Sigmoid colon (tissue), 7 donors: ENCODE measurements at regions of chr6 and their contacts with region 1.

Region 1: GRCh38 chr6:42745707-42746462 is at the start of gene TBCC:
- DNase-seq: peak; percentile 99
- H3K4me3 ChIP-seq: peak within 1 kb of the TSS; percentile 69 to 100 (median 86)
- H3K27ac ChIP-seq: peak within 1 kb of the TSS; percentile 91 to 99 (median 98)
- H3K4me1 ChIP-seq: peaks cover 0 to 36% (median 31%) of the 10 kb centered on the region in 4 donors
- H3K27me3 ChIP-seq: no peaks in the 10 kb centered on the region
- CTCF ChIP-seq: no peak
- EP300 ChIP-seq: no peak
- POLR2A ChIP-seq: peak; percentile 95 to 98
- total RNA-seq, gene TBCC: 16.6 to 39.6 (median 27.7) TPM

Region 2: GRCh38 chr6:42599558-42599957 is 146.3 kb before region 1 on chr6:
- intact Hi-C with region 1: no loop called
- DNase-seq: no peak
- H3K4me3 ChIP-seq: no peak overlapping the region
- H3K27ac ChIP-seq: no peak overlapping the region
- H3K4me1 ChIP-seq: no peaks in the 10 kb centered on the region
- H3K27me3 ChIP-seq: no peaks in the 10 kb centered on the region
- CTCF ChIP-seq: no peak
- EP300 ChIP-seq: no peak
- POLR2A ChIP-seq: no peak

Region 3: DNA sequence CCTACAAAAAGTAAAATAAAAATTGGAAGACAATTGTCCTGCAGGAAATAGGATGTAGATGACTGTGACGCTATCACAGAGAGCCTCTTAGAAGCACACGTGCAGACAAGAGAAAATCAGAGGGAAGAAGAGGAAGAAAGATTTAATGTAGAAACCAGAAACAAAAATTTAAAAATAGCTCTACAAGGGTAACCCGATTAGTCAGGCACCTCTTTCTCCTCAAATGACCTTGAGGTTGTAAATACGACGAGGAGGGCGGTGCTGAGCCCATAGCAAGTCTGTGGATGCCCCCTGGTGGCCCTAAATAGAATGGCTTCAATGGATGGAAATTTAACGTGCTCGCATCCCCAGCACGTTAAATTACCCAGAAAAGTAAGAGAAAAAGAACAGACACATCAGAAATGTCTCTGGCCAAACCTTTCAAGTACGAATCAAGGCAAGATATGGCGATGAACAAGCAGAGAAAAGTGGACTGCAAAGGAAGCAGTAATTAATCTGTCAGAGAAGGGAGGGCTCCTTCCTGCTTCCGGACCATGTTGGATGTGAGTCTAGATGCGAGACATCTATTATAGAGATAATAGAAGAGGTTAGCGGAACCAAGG is 19.3 kb before region 1 on chr6:
- intact Hi-C with region 1: loop called (anchors 2 kb)
- DNase-seq: peak; percentile 93
- H3K4me3 ChIP-seq: peak overlapping the region; percentile 31 to 60 (median 52)
- H3K27ac ChIP-seq: peak overlapping the region; percentile 76 to 90 (median 87)
- H3K4me1 ChIP-seq: peaks cover 0 to 31% (median 13%) of the 10 kb centered on the region in 4 donors
- H3K27me3 ChIP-seq: no peaks in the 10 kb centered on the region
- CTCF ChIP-seq: peak; percentile 86 to 94 (median 92)
- EP300 ChIP-seq: no peak
- POLR2A ChIP-seq: no peak

Region 4: DNA sequence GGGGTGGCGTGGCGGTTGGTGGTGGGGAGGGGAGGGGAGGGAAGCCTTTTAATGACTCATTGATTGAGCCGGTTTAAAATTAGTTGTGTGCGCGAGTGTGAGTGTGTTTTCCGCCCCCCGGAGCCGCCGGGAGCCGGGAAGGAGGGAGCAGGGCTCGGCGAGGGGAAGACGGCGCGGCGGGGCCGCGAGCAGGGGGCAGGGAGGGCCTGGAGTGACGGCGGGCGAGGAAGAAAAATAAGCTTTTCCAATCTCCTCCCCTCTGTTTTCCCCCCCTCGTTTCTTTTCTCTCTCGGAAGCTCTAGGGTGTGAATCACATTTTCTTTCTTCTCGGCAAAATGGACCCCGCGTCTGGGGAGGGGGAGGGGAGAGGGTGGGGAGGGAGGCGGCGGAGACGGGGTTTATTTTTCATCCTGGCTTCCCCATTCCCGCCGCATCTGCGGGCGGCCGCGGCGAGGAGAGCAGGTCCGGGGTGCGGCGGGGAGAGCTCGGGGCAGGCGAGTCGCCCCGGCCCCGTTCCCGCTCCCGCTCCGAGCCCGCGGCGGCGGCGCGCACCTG is 36.8 kb after region 1 on chr6:
- intact Hi-C with region 1: loop called (anchors 1 kb)
- DNase-seq: peak; percentile 90
- H3K4me3 ChIP-seq: peak overlapping the region; percentile 80 to 98 (median 90)
- H3K27ac ChIP-seq: peak overlapping the region; percentile 96 to 100 (median 100)
- H3K4me1 ChIP-seq: peaks cover 0 to 44% (median 38%) of the 10 kb centered on the region in 4 donors
- H3K27me3 ChIP-seq: no peaks in the 10 kb centered on the region
- CTCF ChIP-seq: no peak
- EP300 ChIP-seq: no peak
- POLR2A ChIP-seq: peak; percentile 70 to 78

Region 5: GRCh38 chr6:42819803-42820511 is 74.1 kb after region 1 on chr6:
- intact Hi-C with region 1: loop called (anchors 2 kb)
- DNase-seq: no peak
- H3K4me3 ChIP-seq: no peak overlapping the region
- H3K27ac ChIP-seq: peak overlapping the region; percentile 69 to 82 (median 78)
- H3K4me1 ChIP-seq: peaks cover 0 to 37% (median 21%) of the 10 kb centered on the region in 4 donors
- H3K27me3 ChIP-seq: no peaks in the 10 kb centered on the region
- CTCF ChIP-seq: peak in 2 of 4 experiments; percentile 14 to 29
- EP300 ChIP-seq: no peak
- POLR2A ChIP-seq: no peak

Region 6: DNA sequence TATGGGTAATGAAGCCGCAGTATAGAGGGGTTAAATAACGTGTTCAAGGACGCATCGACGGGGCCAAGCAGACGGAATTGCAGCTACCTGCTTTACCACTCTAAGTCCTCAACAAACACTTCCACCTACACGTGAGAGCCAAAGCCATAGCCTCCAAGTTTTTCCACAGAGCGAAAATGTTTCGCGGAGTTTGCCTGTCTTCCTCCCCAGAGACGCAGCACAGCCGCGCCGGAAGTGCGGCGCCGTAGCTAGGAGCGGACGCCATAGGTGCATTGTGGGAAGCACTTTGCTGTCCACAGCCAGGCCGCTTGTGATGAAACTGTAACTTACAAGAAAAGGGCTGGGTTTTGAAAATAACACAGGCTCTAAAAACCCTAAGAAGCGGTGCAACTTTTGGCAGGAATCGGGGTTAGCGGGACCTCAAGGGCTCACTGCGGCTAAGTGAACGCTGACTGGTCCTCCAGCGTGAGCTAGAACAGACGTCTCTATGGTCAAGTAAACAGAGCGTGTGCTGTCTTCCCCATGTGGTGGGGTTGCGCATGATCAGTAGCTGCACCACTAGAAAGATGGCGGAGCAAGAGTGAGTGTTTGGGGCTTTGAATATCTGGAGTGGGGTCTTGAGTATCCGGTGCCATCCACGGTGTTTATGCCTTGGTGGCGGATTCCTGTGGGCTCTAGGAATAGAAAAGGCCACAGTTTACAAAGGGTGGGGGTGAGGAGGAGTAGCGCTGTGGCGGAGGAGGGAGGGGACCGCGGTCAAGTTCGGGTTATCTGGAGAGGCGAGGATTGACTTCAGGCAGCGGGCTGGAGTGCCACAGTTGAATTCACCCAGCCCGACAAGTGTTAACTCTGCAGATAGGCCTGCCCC is 133.7 kb after region 1 on chr6 and contains the start of gene RPL7L1:
- intact Hi-C with region 1: loop called (anchors 2 kb)
- DNase-seq: peak; percentile 93
- H3K4me3 ChIP-seq: peak within 1 kb of the TSS; percentile 54 to 71 (median 60)
- H3K27ac ChIP-seq: peak within 1 kb of the TSS; percentile 87 to 92 (median 92)
- H3K4me1 ChIP-seq: peaks cover 0 to 40% (median 22%) of the 10 kb centered on the region in 4 donors
- H3K27me3 ChIP-seq: no peaks in the 10 kb centered on the region
- CTCF ChIP-seq: peak in 1 of 4 experiments; percentile 29
- EP300 ChIP-seq: no peak
- POLR2A ChIP-seq: peak in 1 of 2 donors; percentile 54
- total RNA-seq, gene RPL7L1: 67.6 to 79.0 (median 75.7) TPM